Breast epithelium (tissue), 4 donors: ENCODE measurements at regions of chr14 and their contacts with region 1.

Region 1: GRCh38 chr14:92963301-92964123 is 40.6 kb downstream of the CHGA start:
- DNase-seq: no peak
- H3K4me3 ChIP-seq: no peak overlapping the region
- H3K27ac ChIP-seq: no peak overlapping the region
- H3K4me1 ChIP-seq: no peaks in the 10 kb centered on the region
- H3K27me3 ChIP-seq: no peaks in the 10 kb centered on the region
- CTCF ChIP-seq: no peak
- POLR2A ChIP-seq: no peak

Region 2: GRCh38 chr14:92951912-92952471 is 11.5 kb before region 1 on chr14:
- intact Hi-C with region 1: no loop called
- DNase-seq: peak; percentile 36 to 67
- H3K4me3 ChIP-seq: peak overlapping the region in 1 of 3 donors; percentile 9
- H3K27ac ChIP-seq: no peak overlapping the region
- H3K4me1 ChIP-seq: no peaks in the 10 kb centered on the region
- H3K27me3 ChIP-seq: no peaks in the 10 kb centered on the region
- CTCF ChIP-seq: peak; percentile 69 to 91 (median 89)
- POLR2A ChIP-seq: no peak

Region 3: DNA sequence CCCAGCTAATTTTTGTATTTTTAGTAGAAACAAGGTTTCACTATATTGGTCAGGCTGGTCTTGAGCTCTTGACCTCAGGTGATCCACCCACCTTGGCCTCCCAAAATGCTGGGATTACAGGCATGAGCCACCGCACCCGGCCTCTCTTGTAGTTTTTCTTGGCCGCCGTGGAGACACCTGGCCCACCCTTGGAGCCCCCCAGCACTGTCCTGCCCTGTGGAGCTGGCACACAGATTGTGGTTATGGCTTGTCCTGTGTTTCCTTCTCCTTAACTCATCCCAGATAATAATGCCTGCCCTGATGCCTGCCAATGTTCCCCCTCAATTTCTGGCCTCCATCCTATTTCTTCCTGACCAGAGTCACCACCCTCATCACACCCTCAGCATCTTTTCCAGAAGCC is 17.4 kb after region 1 on chr14:
- intact Hi-C with region 1: loop called (anchors 1 kb)
- DNase-seq: no peak
- H3K4me3 ChIP-seq: no peak overlapping the region
- H3K27ac ChIP-seq: no peak overlapping the region
- H3K4me1 ChIP-seq: no peaks in the 10 kb centered on the region
- H3K27me3 ChIP-seq: no peaks in the 10 kb centered on the region
- CTCF ChIP-seq: no peak
- POLR2A ChIP-seq: no peak